B cell (primary cell): ENCODE measurements at regions of chr16 and their contacts with region 1.

Region 1: DNA sequence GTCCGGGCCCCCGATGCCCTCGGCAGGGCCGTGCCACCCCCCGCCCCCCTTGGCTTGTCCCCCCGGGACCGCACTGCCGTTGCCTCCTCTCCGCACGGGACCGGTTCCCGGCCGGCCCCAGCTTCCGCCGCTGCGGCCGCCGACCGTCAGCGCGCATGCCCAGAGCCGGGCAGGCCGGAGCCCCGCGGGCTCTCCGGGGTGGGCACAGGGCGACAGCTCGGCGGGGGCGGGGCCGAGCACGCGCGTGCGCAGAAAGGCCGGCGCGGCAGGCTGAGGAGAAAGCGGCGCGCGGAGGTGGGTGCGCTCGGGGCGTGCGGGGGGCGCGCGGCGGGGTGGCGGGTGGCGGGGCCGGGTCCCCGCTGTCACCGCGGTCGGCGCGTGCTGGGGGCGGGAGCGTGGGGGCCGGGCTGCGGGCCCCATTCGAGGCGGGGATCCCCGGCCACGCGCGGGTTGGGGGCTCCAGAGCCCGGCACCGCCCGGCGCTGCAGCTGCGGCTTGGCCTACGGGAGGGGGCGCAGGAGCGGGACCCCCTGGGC is at the start of gene TBC1D24:
- DNase-seq: peak; percentile 88
- ATAC-seq: peak; percentile 76
- H3K4me3 ChIP-seq: peak within 1 kb of the TSS; percentile 26 to 77 (median 68)
- H3K4me3 Mint-ChIP-seq: peak within 1 kb of the TSS; percentile 79
- H3K27ac ChIP-seq: peak within 1 kb of the TSS in 1 of 2 donors; percentile 62
- H3K27ac Mint-ChIP-seq: peak within 1 kb of the TSS; percentile 53
- H3K4me1 ChIP-seq: peaks cover 42 to 44% of the 10 kb centered on the region in 2 donors
- H3K4me1 Mint-ChIP-seq: peaks cover 28% of the 10 kb centered on the region
- H3K27me3 ChIP-seq: peaks cover 0 to 30% (median 22%) of the 10 kb centered on the region in 4 experiments
- H3K27me3 Mint-ChIP-seq: peaks cover 13% of the 10 kb centered on the region
- CTCF ChIP-seq: no peak
- total RNA-seq, gene TBC1D24: 8.7 and 9.4 TPM in 2 replicates

Region 2: DNA sequence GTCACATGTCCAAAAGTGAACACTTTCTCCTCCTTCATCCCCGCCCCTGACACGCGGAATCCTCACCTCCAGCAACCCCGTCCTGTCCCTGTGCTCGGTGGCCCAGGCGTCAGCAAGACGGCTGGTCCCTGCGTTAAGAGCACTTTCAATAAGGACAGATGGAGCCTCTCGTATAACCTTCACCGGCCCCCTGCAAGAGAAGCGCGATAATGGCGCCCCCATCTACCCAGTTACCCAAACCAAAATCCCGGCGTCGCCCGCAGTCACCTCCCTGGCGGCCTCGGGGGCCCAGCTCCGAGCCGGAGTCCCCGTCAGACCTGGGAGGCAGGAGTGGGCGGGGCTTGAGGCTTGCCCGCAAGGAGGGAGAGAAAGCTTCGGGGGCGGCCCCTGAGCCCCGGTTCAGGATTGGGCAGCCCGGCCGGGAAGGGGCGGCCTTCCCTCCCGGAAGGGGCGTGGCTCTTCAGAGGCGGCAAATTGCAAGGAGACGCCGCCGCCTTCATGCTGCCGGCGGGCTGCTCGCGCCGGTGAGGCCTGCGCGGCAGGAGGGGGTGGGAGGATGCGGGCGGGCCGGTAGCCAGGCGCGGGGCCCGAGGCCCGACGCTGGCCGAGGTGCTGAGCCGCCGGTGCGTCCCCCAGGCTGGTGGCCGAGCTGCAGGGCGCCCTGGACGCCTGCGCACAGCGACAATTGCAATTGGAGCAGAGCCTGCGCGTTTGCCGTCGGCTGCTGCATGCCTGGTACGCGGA is 15.1 kb before region 1 on chr16 and contains the start of gene TEDC2:
- CTCF ChIA-PET with region 1: no interaction called
- POLR2A ChIA-PET with region 1: interaction called, 6 read pairs
- intact Hi-C with region 1: loop called (anchors 1 kb)
- DNase-seq: peak; percentile 96
- ATAC-seq: peak; percentile 100
- H3K4me3 ChIP-seq: peak within 1 kb of the TSS; percentile 17 to 84 (median 54)
- H3K4me3 Mint-ChIP-seq: peak within 1 kb of the TSS; percentile 94
- H3K27ac ChIP-seq: peak within 1 kb of the TSS in 1 of 2 donors; percentile 34
- H3K27ac Mint-ChIP-seq: peak within 1 kb of the TSS; percentile 68
- H3K4me1 ChIP-seq: peaks cover 10 to 16% of the 10 kb centered on the region in 2 donors
- H3K4me1 Mint-ChIP-seq: peaks cover 6% of the 10 kb centered on the region
- H3K27me3 ChIP-seq: no peaks in the 10 kb centered on the region
- H3K27me3 Mint-ChIP-seq: no peaks in the 10 kb centered on the region
- CTCF ChIP-seq: no peak
- total RNA-seq, gene TEDC2: 1.5 and 2.9 TPM in 2 replicates

Region 3: DNA sequence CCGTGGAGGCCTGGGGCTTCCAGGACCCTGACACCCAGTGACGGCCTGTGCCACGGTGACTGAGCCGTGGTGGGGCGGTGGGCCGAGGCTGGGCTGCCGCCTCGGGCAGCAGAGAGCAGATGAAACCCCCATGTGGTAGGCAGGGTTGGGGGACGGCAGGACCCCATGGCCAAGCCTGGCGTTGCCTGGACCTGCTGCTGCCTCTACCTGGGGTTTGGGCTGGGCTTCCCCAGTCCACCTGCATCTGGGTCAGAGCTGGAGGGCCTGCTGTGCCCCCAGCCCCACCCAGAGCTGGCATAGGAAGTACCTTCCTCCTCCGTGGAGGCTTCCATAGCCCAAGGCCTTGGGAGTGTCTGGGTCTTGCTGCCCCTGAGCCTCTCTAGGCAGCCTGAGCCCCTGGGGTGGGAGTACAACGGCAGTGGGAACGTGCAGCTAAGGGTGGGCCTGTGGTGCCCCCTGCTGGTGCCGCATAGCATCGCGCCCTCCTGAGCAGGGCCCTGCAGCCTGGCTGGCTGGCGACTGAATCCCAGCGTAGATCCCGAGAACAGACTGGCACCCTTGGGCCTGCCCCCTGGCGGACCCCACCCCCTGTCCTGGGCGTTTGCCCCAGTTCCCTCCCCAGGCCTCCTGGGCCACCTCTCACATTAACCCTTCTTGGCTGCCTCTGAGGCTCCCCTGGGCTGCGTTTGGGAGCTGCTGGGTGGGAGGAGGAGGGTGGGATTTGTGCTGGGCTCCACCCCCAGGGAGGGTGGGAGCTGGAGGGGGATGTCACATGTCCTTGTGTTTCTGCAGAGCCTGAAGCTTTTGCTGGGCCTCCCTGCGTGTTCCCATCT is 26.2 kb after region 1 on chr16:
- CTCF ChIA-PET with region 1: interaction called, 13 read pairs
- POLR2A ChIA-PET with region 1: no interaction called
- intact Hi-C with region 1: no loop called
- DNase-seq: peak; percentile 86
- ATAC-seq: peak; percentile 97
- H3K4me3 ChIP-seq: no peak overlapping the region
- H3K4me3 Mint-ChIP-seq: no peak overlapping the region
- H3K27ac ChIP-seq: no peak overlapping the region
- H3K27ac Mint-ChIP-seq: no peak overlapping the region
- H3K4me1 ChIP-seq: peaks cover 0 to 8% of the 10 kb centered on the region in 2 donors
- H3K4me1 Mint-ChIP-seq: peaks cover 11% of the 10 kb centered on the region
- H3K27me3 ChIP-seq: no peaks in the 10 kb centered on the region
- H3K27me3 Mint-ChIP-seq: no peaks in the 10 kb centered on the region
- CTCF ChIP-seq: peak; percentile 99